AG04449 (cell line): ENCODE measurements at regions of chr1 and their contacts with region 1.

Region 1: DNA sequence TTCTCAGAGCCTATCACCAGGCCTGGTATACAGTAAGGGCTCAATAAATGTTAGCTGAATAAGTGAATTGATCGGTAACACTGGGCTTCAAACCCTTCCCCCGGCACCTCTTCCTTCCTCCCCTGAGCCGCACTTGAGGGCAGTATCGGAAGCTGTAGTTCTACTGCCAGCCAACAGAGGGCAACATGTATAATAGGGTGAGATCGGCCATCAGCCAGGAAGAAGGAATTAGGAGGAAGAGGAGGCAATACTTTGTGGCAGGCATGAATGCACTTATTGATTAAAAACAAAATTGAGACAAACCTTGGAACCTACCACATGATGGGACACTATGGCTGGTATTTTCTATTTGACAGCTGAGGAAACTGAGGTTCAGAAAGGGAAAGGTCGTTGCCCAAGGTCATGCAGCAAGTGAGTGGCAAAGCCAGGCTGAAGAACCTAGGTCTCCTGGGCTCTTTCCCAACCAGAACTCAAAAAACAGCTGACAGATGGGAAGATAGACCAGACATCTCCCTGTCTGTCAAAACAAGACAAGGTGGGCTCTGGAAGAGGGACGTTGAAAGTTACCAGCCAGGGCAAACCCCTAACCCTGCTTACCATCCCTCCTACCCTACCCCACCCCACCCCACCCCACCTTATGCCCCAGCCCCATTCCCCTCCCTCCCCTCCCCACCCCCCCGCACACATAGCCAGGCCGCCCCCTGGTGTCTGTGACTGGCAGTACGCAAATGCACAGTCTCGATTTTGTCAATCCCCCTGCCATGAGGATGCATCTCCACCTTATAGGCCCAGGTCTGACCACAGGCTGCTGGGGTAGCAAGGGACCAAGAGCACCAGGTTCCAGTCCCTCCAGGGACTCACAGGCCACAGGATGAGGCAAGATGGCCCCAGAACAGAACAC is 107.3 kb upstream of the RUNX3 start:
- DNase-seq: no peak
- H3K4me3 ChIP-seq: no peak overlapping the region
- CTCF ChIP-seq: peak; percentile 64

Region 2: DNA sequence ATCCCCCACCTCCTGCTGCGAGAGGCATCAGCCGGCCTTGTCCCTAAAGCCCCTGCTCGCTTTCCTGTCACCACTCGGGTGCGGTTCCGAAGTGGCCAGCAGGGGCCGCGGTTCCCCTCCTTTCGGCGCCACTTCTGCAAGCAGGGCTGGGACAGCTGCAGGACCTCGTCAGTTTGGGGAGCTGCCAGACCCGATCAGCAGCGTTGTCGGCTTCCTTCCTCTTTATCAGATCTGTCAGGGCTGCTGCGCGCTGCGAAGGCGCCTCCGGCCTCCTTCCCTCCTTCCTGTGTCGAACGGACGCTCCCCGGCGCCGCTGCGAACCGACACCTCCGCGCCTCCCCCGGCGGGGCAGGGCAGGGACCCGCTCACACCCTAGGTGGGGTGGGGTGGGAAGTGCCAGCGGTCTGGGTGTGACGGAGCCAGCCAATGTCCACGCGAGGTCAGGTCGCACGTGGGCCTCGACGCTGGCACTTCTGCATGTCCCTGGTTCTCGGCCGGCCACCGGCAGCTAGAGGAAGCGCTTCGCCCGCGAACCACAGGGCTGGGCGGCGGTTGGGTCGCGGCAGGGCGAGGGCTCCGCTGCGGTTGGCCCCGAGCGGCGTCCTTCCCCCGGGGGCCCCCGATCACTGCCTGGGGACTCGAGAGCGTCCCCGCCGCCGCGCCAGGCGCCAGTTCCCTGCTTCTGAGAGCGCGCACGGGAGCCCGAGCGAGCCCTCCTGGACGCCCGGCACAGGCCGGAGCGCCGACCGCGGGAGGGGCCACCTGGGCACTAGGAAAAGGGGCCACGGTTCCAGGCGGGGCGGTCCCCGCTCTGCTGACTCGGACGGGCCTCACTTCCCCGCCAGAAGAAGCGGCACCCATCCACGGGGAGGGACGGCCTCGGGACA is 189.2 kb before region 1 on chr1:
- CTCF ChIA-PET with region 1: interaction called, 11 read pairs
- POLR2A ChIA-PET with region 1: no interaction called
- DNase-seq: peak; percentile 42
- H3K4me3 ChIP-seq: peak overlapping the region; percentile 54
- CTCF ChIP-seq: peak; percentile 94

Region 3: DNA sequence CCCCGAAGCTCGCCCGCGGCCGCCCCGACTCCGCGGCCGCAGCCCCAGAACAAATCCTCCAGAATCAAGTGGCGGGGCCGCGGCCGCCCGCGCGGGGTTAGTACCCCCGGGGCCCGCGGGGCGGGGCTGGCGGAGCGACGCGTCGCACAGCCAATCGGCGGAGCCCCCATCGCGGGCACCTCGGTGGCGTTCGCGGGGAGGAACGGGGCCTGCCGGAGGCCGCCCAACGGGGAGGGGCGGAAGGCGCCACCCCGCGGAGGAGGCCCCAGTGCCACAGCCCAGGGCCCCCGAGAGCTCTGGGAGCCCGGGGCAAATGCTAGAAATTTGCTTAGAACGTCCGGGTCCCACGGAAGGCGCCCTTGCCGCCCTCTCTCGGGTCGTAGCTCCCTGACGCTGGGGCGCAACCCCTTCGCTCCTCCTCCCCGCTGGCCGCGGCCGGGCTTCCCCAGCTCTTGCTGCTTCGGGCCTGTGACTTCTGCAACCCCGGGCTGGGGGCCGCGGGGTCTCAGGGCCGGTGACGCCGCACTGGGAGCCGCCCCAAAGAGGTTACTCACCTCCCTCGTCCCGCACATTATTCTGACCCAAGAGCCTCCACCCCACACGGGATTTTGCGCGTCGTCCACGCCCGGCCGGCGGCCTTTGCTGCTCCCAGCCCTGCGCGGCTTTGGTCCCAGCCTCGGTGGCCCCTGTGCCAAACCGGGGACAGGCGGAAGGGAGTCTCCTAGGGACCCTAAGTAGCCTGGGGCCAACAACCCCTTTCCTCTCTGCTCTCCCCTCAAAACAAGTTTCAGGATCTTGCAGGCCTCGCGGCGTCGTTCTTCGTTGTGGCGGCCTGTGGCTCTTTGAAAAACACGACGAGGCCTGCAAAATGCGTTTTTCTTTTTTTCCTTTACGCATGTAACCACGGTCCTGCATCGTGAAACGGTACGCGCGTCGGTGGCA is 106.9 kb before region 1 on chr1 and contains the start of gene RUNX3:
- CTCF ChIA-PET with region 1: interaction called, 164 read pairs
- POLR2A ChIA-PET with region 1: no interaction called
- DNase-seq: no peak
- H3K4me3 ChIP-seq: peak within 1 kb of the TSS; percentile 66
- CTCF ChIP-seq: peak; percentile 28

Region 4: GRCh38 chr1:24952413-24952841 is 85.0 kb before region 1 on chr1:
- CTCF ChIA-PET with region 1: interaction called, 14 read pairs
- POLR2A ChIA-PET with region 1: no interaction called
- DNase-seq: no peak
- H3K4me3 ChIP-seq: no peak overlapping the region
- CTCF ChIP-seq: no peak

Region 5: GRCh38 chr1:25017436-25018109 is 19.9 kb before region 1 on chr1:
- CTCF ChIA-PET with region 1: interaction called, 83 read pairs
- POLR2A ChIA-PET with region 1: no interaction called
- DNase-seq: peak; percentile 16
- H3K4me3 ChIP-seq: no peak overlapping the region
- CTCF ChIP-seq: no peak

Region 6: DNA sequence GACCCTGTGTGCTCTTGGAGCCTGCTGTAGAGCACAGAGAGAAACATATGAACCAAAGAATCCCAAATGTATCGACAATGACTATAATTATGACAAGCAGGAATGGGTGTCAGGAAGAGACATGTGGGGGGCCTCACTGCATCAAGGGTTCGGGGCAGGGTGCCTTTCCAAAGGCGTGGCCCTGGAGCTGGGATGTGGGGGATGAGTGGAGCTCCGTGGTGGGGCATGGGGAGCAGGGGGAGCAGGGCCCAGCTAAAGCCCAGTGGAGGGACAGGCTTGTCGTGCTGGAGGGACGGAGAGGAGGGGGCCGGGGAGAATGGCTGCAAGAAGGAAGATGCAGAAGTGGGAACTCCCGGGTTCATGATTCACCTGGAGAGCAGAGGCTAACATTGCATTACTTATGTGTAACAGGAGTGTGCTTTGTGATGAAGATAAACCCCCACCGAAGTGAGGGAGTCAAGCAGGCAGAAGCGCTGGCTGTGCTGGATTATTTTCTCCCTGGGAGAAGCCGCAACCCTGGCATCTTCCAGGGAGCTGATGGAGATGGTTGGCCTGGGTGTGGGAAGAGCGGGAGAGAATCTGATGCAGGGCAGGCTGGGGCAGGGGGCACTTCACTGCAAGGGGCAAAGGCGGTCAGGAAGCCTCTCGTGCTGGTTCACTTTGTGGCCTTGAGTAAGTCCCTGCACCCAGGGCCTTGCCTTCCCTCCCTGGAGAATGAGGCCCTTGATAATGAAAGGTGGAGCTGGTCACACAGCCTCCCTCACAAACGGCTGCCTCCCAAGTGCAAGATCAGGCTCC is 17.3 kb after region 1 on chr1:
- CTCF ChIA-PET with region 1: interaction called, 59 read pairs
- POLR2A ChIA-PET with region 1: no interaction called
- DNase-seq: no peak
- H3K4me3 ChIP-seq: no peak overlapping the region
- CTCF ChIP-seq: no peak

Region 7: DNA sequence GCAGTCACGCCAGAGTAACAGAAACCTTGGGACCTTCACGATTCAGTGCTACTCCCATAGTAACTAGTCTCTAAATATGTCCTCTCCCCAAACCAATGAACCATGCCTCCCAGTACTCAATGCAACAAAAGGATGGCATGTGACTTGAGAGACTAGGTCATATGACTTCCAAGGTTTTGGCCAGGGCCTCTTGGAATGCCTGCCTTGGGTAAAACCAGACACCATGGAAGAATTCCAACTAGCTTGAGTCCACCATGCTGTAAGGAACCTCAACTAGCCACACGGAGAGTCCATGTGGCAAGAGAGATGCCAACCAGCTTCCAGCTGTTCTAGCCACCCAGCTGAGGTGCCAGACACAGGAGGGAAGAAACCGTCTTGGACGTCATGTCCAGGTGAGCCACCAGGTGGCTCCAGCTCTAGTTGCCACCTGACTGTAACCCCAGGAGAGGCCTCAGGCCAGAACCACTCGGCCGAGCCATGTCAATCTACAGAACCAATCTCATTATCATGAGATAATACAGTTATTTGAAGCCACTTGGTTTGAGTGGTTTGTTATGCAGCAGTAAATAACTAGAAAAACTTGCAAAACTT is 79.9 kb after region 1 on chr1:
- CTCF ChIA-PET with region 1: no interaction called
- POLR2A ChIA-PET with region 1: no interaction called
- DNase-seq: no peak
- H3K4me3 ChIP-seq: no peak overlapping the region
- CTCF ChIP-seq: no peak

Region 8: DNA sequence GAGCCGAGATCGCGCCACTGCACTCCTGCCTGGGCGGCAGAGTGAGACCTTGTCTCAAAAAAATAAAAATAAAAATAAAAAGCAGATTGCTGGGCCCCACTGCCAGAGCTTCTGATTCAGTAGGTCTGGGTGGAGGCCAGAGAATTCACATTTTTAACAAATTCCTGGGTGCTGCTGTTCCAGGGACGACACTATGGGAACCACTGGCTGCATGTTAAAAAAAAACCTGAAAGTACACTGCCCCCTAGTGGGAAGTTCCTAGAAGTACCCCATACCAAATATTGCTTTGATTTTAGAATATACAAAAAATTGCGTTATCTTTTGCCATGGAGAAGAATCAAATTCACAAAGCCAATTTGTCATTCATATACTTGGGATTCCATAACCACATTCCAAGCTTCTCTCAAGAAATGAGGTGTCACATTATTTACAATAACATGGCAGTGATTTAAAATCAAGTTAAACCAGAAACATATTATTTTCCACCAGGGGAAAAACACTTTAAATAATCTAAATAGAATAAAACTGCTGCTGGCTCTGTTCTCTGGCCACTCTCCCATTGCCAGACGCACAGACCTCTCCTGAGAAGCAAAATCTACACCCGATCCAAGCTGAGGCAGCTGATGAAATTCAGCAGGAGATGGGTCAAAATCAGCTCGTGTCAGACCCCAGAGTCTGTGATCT is 167.5 kb after region 1 on chr1:
- CTCF ChIA-PET with region 1: interaction called, 18 read pairs
- POLR2A ChIA-PET with region 1: no interaction called
- DNase-seq: peak; percentile 59
- H3K4me3 ChIP-seq: no peak overlapping the region
- CTCF ChIP-seq: peak; percentile 50